ENCODE measurements at regions of chr2 and their contacts with region 1.

Region 1: GRCh38 chr2:54341656-54342055 is 85.6 kb upstream of the TSPYL6 start:
- DNase-seq: no peak
- ATAC-seq: peak; percentile 46

Region 2: DNA sequence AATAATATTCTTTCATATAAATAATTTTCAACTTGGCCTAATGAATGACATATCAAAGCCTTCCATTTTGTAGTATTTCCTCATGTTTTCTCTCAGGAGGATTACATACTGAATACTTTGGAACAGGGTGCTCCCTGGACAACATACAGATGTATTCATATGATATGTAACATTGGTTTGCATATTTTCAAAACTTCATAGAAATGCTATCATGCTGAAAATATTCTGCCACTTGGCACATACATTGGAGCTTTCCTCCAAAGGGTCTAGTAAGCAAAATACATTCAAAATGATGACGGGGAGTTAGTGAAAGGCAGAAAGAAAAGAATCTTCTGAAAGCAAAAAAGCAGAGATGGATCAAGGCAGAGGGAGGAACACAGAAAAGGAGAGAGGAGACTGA is 746.7 kb after region 1 on chr2:
- intact Hi-C with region 1: loop called (anchors 10 kb)
- DNase-seq: no peak
- ATAC-seq: no peak

Measured in Right ventricle myocardium inferior (tissue), 1 donor.